Breast epithelium (tissue), 4 donors: ENCODE measurements at regions of chr10 and their contacts with region 1.

Region 1: GRCh38 chr10:80408242-80409101 is at the start of gene PRXL2A:
- DNase-seq: peak; percentile 57 to 84
- H3K4me3 ChIP-seq: peak within 1 kb of the TSS; percentile 64 to 92 (median 83)
- H3K27ac ChIP-seq: peak within 1 kb of the TSS; percentile 81 to 88
- H3K4me1 ChIP-seq: peaks cover 3 to 7% of the 10 kb centered on the region in 2 donors
- H3K27me3 ChIP-seq: no peaks in the 10 kb centered on the region
- CTCF ChIP-seq: no peak
- POLR2A ChIP-seq: no peak
- total RNA-seq, gene PRXL2A: 82.3 to 547 (median 88.4) TPM

Region 2: DNA sequence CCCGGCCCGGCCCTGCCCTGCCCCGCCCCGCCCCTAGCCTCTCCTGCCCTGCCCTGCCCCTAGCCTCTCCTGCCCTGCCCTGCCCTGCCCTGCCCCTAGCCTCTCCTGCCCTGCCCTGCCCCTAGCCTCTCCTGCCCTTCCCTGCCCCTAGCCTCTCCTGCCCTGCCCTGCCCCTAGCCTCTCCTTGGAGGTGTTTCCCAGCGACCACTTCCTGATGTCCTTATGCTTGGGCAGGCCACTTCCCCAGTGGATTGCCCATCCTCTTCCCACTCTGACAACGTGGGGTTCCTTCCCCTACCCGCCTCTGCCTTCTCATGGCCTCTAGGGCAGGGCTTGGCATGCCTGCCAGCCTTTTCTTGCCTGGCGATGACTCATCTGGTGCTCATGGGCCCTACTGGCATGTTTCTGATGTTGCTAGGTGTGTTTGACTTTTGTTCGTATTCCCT is 21.1 kb after region 1 on chr10:
- intact Hi-C with region 1: no loop called
- DNase-seq: no peak
- H3K4me3 ChIP-seq: no peak overlapping the region
- H3K27ac ChIP-seq: peak overlapping the region in 1 of 2 donors; percentile 38
- H3K4me1 ChIP-seq: no peaks in the 10 kb centered on the region
- H3K27me3 ChIP-seq: no peaks in the 10 kb centered on the region
- CTCF ChIP-seq: no peak
- POLR2A ChIP-seq: no peak

Region 3: DNA sequence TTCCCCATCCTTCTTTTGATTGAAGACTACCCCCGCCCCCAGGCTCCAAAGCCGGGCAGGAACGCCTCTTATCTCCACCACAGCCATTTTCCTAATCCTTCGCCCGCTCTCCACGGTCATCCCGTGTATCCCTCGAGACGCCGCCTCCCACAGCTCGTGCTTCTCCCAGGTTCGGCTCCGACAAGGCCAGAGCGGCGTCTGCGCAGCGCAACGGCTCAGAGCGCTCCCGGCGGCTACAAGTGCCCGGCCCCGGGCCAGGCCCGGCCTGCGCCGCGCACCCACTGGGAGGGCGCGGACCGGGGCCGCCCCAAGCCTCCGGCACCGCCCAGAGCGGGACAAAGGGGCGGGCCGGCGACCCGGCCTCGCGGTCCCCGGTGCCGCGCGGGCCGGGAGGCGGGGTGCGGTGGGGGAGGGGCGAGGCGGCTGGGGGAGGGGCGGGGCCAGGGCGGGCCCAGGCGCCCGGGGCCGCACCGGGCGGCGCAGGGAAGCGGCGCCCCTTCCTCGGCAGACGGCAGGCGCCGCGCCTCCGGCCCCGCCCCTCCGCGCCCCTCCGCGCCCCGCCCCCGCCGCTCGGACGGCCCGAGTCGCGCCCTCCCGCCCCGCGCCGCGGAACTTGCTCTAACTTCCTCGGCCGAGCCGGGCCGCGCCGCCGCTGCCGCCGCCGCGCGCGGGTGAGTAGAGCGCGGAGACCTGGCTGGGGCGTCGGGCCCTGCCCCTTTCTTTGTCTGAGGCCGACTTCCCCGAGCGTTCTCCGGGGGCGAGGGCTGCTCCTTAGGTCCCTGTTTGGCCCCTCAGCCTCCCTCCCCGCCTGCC is 45.4 kb after region 1 on chr10 and contains the start of gene TSPAN14:
- intact Hi-C with region 1: loop called (anchors 5 kb)
- DNase-seq: peak; percentile 73 to 76
- H3K4me3 ChIP-seq: peak within 1 kb of the TSS; percentile 83 to 96 (median 91)
- H3K27ac ChIP-seq: peak within 1 kb of the TSS; percentile 97 to 98
- H3K4me1 ChIP-seq: peaks cover 8 to 30% of the 10 kb centered on the region in 2 donors
- H3K27me3 ChIP-seq: no peaks in the 10 kb centered on the region
- CTCF ChIP-seq: no peak
- POLR2A ChIP-seq: no peak
- total RNA-seq, gene TSPAN14: 52.8 to 76.8 (median 74.8) TPM